Brain microvascular endothelial cell (primary cell): ENCODE measurements at regions of chr16 and their contacts with region 1.

Region 1: DNA sequence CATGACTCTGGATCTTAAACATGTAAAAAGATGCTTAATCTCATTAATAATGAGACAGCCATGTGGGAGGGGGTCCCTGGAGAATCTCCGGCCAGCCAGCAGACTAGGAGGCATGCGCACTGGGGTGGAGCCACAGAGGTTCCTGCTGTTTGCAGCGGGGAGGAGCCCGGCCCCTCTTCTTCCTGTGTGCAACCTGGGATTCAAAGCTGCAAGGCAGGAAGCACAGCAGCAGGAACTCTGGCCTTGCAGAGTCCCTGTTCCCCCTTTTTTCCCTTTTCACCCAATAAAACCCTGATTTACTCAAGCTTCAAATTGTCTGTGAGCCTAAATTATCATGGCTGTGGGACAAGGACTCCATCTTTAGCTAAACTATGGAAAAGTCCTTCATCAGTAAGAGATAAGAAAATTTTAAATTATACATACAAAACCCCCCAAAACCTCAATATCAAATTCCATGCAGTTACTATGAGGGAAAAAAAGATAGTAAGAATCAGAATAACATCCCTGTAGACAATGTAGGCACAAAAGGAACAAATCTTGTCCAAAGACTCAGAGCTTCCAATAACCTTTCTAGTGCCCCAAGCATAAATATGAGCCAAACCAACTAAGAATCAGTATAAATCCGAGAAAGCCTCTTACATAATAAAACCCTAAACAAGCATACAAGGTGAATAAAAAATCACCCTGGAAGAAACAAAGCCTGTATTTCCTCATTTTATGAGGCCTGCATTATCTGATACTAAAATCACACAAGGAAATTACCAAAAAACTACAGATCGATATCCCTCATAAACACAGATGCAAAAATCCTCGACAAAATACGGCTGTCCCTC is 12.1 kb downstream of the CFDP1 start:
- DNase-seq: peak; percentile 71
- H3K4me3 ChIP-seq: no peak overlapping the region
- H3K27ac ChIP-seq: no peak overlapping the region
- H3K27me3 ChIP-seq: no peaks in the 10 kb centered on the region
- CTCF ChIP-seq: peak; percentile 3

Region 2: DNA sequence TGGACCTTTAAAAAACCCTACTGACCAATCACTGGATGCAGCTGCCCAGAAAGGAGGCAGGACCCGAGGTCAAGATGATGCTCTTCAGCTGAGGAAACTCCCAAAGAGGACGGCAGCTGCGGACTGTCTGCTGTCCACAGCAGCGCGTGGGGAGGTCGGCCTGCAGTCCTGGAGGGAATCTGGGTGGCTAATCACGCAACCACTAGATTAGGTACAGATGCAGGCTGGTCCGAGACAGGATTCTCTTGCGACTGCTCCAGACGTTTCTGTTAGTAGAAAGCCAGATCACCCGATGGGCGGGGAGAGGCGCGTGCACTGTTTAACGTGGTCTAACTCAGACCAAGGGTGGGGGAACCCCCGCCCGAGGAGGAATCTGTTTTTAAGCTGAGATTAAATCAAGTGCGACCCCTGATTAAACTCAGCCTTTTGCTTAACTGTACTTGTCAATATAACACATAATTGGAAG is 223.0 kb before region 1 on chr16:
- in situ Hi-C with region 1: loop called (anchors 25 kb)
- DNase-seq: peak; percentile 12
- H3K4me3 ChIP-seq: no peak overlapping the region
- H3K27ac ChIP-seq: no peak overlapping the region
- H3K27me3 ChIP-seq: no peaks in the 10 kb centered on the region
- CTCF ChIP-seq: no peak

Region 3: DNA sequence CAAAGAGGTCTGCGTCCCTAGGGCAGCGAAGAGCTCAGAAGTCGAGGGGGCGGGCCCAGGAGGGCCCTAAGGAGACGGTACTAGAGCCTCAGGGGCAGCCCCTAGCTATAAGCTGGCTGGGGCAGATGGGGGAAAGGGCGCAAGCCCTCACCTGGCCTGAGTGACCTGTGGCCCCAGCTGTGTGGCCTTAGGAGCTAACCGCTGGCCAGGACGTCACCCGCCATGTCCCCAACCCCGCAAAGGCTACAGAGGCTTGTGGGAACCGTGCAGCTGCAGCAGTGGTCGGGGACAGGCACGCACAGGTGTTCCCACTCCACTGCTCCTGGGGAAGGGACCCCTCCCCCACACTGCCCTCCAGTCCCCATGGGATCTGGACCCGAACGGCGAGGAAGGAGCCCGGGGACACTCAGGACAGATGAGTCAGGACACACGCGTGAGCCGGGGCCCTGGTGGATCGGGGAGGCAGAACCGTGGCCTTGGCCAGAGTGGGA is 212.2 kb before region 1 on chr16:
- in situ Hi-C with region 1: no loop called
- DNase-seq: no peak
- H3K4me3 ChIP-seq: no peak overlapping the region
- H3K27ac ChIP-seq: no peak overlapping the region
- H3K27me3 ChIP-seq: no peaks in the 10 kb centered on the region
- CTCF ChIP-seq: no peak

Region 4: DNA sequence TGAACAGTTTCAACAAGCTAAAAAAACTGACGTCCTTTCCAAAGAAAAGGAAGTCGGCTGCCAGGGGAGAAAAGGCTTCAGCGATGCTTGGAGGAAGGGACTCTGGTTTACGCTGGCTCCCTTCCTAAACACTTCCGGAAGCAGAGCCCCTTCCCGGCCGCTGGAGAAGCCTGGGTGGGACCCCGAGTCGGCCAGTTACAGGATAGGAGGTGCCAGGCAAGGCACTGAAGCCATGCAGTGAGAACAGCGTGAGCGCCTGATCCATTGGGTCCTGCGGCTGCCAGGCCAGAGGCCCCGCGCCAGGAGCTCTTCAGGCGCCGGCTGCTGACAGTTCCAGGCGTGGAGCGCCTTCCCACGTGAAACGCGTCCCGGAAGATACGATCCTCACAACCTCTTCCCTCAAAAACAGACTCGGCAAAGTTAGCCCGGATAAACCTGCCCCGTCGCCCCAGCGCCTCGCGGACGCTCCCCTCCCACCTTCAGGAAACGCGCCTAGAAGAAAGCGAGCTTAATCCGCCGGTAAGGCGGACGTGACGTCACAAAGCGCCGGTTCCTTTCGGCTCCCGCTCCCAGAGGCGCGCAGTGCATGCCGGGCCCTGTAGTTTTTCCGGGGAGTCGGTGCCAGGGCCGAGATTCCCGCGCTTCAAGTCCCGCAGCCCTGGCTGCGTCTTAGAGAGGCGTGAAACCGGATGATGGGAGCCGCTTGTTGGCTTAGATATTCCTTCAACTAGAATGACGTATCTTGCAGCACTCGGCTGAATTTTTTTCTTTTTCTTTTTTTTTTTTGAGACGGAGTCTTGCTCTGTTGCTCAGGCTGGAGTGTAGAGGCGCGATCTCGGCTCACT is 201.8 kb after region 1 on chr16 and contains the start of gene ADAT1:
- in situ Hi-C with region 1: no loop called
- DNase-seq: peak; percentile 98
- H3K4me3 ChIP-seq: peak within 1 kb of the TSS; percentile 89
- H3K27ac ChIP-seq: peak within 1 kb of the TSS; percentile 72
- H3K27me3 ChIP-seq: no peaks in the 10 kb centered on the region
- CTCF ChIP-seq: no peak